ENCODE measurements at regions of chr5 and their contacts with region 1.

Region 1: GRCh38 chr5:111159845-111160244 is 64.3 kb upstream of the CAMK4 start:
- DNase-seq: no peak
- H3K4me3 ChIP-seq: no peak overlapping the region
- H3K27ac ChIP-seq: no peak overlapping the region
- H3K4me1 ChIP-seq: no peaks in the 10 kb centered on the region
- H3K27me3 ChIP-seq: no peaks in the 10 kb centered on the region

Region 2: GRCh38 chr5:111461255-111461671 is 301.4 kb after region 1 on chr5:
- in situ Hi-C with region 1: loop called (anchors 10 kb)
- DNase-seq: peak; percentile 70
- H3K4me3 ChIP-seq: no peak overlapping the region
- H3K27ac ChIP-seq: no peak overlapping the region
- H3K4me1 ChIP-seq: no peaks in the 10 kb centered on the region
- H3K27me3 ChIP-seq: no peaks in the 10 kb centered on the region

Region 3: GRCh38 chr5:112154940-112155686 is 995.3 kb after region 1 on chr5:
- in situ Hi-C with region 1: loop called (anchors 10 kb)
- DNase-seq: peak; percentile 90
- H3K4me3 ChIP-seq: no peak overlapping the region
- H3K27ac ChIP-seq: peak overlapping the region; percentile 75
- H3K4me1 ChIP-seq: peaks cover 12% of the 10 kb centered on the region
- H3K27me3 ChIP-seq: no peaks in the 10 kb centered on the region

Measured in GM23248 (cell line).